A673 (cell line): ENCODE measurements at regions of chr6 and their contacts with region 1.

Region 1: GRCh38 chr6:4804095-4804494 is 27.9 kb downstream of the CDYL start:
- DNase-seq: no peak
- H3K4me3 ChIP-seq: no peak overlapping the region
- H3K27ac ChIP-seq: no peak overlapping the region
- H3K4me1 ChIP-seq: peaks cover 29% of the 10 kb centered on the region
- H3K27me3 ChIP-seq: no peaks in the 10 kb centered on the region
- CTCF ChIP-seq: no peak

Region 2: GRCh38 chr6:4388675-4389074 is 415.4 kb before region 1 on chr6:
- CTCF ChIA-PET with region 1: no interaction called
- POLR2A ChIA-PET with region 1: interaction called, 12 read pairs
- intact Hi-C with region 1: no loop called
- DNase-seq: no peak
- H3K4me3 ChIP-seq: no peak overlapping the region
- H3K27ac ChIP-seq: no peak overlapping the region
- H3K4me1 ChIP-seq: no peaks in the 10 kb centered on the region
- H3K27me3 ChIP-seq: no peaks in the 10 kb centered on the region
- CTCF ChIP-seq: no peak

Region 3: GRCh38 chr6:4714961-4715501 is 89.1 kb before region 1 on chr6:
- CTCF ChIA-PET with region 1: no interaction called
- POLR2A ChIA-PET with region 1: no interaction called
- intact Hi-C with region 1: no loop called
- DNase-seq: no peak
- H3K4me3 ChIP-seq: no peak overlapping the region
- H3K27ac ChIP-seq: no peak overlapping the region
- H3K4me1 ChIP-seq: no peaks in the 10 kb centered on the region
- H3K27me3 ChIP-seq: no peaks in the 10 kb centered on the region
- CTCF ChIP-seq: no peak